PC-9 (cell line): ENCODE measurements at regions of chr21 and their contacts with region 1.

Region 1: DNA sequence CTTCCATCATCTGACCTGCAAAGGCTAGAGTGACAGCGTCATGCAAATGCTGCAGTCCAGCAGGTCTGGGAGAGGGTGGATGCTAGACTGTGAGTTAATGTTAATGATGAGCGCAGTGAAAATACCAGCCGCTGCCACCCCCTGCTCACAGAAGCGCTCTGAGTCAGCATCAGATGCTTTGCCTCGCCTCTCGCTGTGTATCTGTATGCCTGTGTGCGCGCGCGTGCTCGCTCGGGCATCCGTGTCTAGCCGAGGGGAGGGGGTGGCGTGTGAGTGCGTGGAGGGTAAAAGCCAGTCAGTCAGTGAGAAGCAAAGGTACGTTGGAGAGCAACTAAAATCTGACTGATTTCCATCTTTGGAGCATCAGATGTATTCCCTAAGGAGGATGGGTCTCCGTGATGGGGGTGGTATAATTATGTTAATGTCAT is 858.7 kb downstream of the USP25 start:
- DNase-seq: peak; percentile 64 to 78
- H3K4me3 ChIP-seq: peak overlapping the region; percentile 49
- H3K27ac ChIP-seq: peak overlapping the region; percentile 90
- H3K4me1 ChIP-seq: peaks cover 40% of the 10 kb centered on the region
- H3K27me3 ChIP-seq: no peaks in the 10 kb centered on the region
- CTCF ChIP-seq: no peak

Region 2: GRCh38 chr21:16569679-16570078 is 18.8 kb before region 1 on chr21:
- CTCF ChIA-PET with region 1: interaction called, 3 read pairs
- POLR2A ChIA-PET with region 1: no interaction called
- intact Hi-C with region 1: loop called (anchors 2 kb)
- DNase-seq: no peak
- H3K4me3 ChIP-seq: no peak overlapping the region
- H3K27ac ChIP-seq: no peak overlapping the region
- H3K4me1 ChIP-seq: peaks cover 14% of the 10 kb centered on the region
- H3K27me3 ChIP-seq: no peaks in the 10 kb centered on the region
- CTCF ChIP-seq: no peak

Region 3: GRCh38 chr21:16815243-16815642 is 226.8 kb after region 1 on chr21:
- CTCF ChIA-PET with region 1: no interaction called
- POLR2A ChIA-PET with region 1: no interaction called
- intact Hi-C with region 1: loop called (anchors 10 kb)
- DNase-seq: no peak
- H3K4me3 ChIP-seq: no peak overlapping the region
- H3K27ac ChIP-seq: no peak overlapping the region
- H3K4me1 ChIP-seq: no peaks in the 10 kb centered on the region
- H3K27me3 ChIP-seq: no peaks in the 10 kb centered on the region
- CTCF ChIP-seq: no peak

Region 4: DNA sequence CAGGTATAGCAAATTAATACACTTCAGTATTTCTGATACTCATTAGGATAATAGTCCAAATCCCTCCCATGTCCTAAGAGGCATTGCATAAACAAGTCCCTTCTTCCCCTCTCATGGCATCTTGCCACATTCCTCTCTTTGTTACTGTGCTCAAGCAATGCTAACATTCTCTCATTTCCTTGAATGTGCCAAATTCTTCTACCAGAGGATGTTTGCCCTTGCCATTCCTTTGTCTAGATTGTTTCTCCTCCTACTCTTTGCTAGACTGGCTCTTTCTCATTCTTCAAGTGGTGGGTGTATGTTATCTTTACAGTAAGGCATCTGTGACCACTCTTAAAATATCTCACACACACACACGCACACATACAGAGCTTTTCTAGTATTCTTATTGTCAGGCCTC is 303.4 kb after region 1 on chr21:
- CTCF ChIA-PET with region 1: no interaction called
- POLR2A ChIA-PET with region 1: no interaction called
- intact Hi-C with region 1: no loop called
- DNase-seq: peak in 1 of 2 experiments; percentile 25
- H3K4me3 ChIP-seq: no peak overlapping the region
- H3K27ac ChIP-seq: no peak overlapping the region
- H3K4me1 ChIP-seq: no peaks in the 10 kb centered on the region
- H3K27me3 ChIP-seq: no peaks in the 10 kb centered on the region
- CTCF ChIP-seq: no peak

Region 5: DNA sequence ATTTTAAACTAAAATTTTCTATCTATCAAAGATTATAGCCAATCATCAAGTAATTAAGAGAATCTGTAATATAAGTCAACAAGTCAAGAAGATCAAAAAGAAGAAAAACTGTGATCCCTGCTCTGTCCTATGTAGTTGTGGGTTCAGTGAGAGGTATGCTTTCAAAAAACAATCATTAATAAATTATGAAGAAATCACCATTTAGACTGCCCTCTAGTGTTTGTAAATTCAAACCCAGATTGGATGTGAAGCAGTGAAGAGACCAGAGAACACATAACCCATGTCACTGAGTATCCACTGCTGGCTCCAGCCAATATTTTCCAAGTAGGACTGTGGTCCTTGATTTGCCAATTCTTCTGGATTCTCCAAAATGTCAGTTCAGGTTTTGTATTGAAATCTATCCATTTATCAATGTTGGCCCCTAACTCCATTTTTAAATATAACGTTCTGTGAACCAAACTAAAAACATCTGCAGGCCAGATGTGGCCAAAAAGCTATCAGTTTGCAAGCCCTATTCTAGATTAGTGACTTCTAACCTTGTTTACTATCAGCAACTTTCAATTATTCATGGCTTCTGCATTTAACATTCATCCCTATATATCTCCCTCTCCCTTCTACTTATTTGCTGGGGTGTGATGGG is 456.9 kb after region 1 on chr21:
- CTCF ChIA-PET with region 1: no interaction called
- POLR2A ChIA-PET with region 1: no interaction called
- intact Hi-C with region 1: loop called (anchors 10 kb)
- DNase-seq: no peak
- H3K4me3 ChIP-seq: no peak overlapping the region
- H3K27ac ChIP-seq: no peak overlapping the region
- H3K4me1 ChIP-seq: no peaks in the 10 kb centered on the region
- H3K27me3 ChIP-seq: no peaks in the 10 kb centered on the region
- CTCF ChIP-seq: peak; percentile 65; the same call in 1 of the 2 replicates